Dendritic cell treated with granulocyte-macrophage colony-stimulating factor and Interleukin-4, amounts not matched to agents 40 ng/mL and 50 ng/mL, for 4 days (primary cell): ENCODE measurements at regions of chr12 and their contacts with region 1.

Region 1: GRCh38 chr12:4857472-4858291 is 52.0 kb upstream of the KCNA1 start:
- H3K4me3 Mint-ChIP-seq: no peak overlapping the region
- H3K27ac Mint-ChIP-seq: no peak overlapping the region
- H3K4me1 Mint-ChIP-seq: peaks cover 7% of the 10 kb centered on the region
- H3K27me3 Mint-ChIP-seq: peaks cover 35% of the 10 kb centered on the region

Region 2: GRCh38 chr12:4962539-4963486 is 105.1 kb after region 1 on chr12:
- intact Hi-C with region 1: no loop called
- H3K4me3 Mint-ChIP-seq: no peak overlapping the region
- H3K27ac Mint-ChIP-seq: no peak overlapping the region
- H3K4me1 Mint-ChIP-seq: no peaks in the 10 kb centered on the region
- H3K27me3 Mint-ChIP-seq: peaks cover 22% of the 10 kb centered on the region

Region 3: GRCh38 chr12:5003020-5003666 is 145.5 kb after region 1 on chr12:
- intact Hi-C with region 1: loop called (anchors 1 kb)
- H3K4me3 Mint-ChIP-seq: no peak overlapping the region
- H3K27ac Mint-ChIP-seq: no peak overlapping the region
- H3K4me1 Mint-ChIP-seq: no peaks in the 10 kb centered on the region
- H3K27me3 Mint-ChIP-seq: peaks cover 14% of the 10 kb centered on the region

Region 4: DNA sequence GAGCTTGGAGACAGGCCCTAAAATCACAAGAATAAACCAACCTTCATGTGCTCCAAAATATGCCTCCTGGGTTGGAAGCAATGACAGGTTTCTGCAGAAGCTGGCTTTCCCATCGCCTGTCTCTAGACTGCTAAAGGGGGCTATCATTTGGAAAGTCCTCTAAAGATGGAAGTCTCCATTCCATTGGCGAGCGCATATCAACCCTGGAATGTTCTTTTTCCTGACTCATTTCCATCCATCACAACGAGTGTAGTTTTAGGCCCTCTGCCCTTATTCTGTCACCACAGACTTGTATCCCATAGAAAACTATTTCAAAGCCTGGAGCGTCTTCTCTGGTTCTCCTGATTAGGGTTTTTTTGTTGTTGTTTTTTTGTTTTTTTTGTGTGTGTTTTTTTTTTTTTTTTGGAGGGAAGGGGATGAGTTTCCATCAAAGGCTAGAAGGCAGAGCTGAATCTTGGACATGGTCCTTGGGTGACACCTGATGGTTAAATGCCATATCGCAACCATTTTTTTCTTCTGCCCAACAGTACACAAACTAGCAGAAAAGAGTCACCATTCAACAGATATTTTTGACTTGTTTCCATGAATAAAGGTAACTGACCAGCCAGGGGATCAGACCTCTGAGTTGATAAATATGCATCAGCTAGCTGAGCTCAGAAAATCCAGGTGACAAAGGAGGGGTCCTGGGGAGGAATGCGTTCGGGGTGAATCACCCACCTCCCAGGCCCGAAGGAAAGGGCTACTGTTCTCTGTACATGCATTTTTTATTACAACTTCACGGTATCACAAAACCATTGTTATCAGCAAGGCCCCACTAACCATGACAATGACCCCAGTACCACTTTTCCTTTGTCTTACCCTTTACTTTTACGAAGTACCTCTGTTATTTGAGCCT is 226.5 kb after region 1 on chr12:
- intact Hi-C with region 1: loop called (anchors 1 kb)
- H3K4me3 Mint-ChIP-seq: no peak overlapping the region
- H3K27ac Mint-ChIP-seq: no peak overlapping the region
- H3K4me1 Mint-ChIP-seq: no peaks in the 10 kb centered on the region
- H3K27me3 Mint-ChIP-seq: peaks cover 15% of the 10 kb centered on the region